A673 (cell line): ENCODE measurements at regions of chr6 and their contacts with region 1.

Region 1: DNA sequence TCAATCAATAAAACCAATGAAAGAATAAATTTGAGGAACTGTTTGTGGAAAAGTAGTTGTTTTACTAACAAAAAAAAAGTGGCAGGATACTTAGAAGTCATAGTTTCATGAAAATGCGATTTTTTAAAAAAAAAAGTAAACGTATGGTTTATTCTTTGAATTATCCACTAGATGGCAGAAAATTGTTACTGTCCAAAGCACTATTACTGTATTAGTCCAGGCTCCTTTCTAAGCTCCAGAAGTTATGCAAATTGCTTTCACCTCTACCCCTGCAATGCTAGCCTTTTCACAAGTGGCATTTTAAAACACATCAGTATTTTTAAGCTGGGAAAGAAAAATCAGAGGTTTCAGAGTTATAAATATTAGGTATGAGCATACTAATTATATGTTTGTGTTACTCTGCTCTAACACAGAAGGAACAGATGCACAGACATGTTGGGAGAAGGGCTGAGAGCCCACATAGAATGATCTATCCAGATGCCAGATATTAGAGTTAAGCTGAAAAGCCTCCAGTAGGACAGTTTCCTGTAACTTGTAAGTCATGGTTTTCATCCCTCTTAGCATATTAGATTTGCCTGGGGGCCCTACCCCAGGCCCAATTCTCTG is 63.9 kb downstream of the FHL5 start:
- DNase-seq: peak; percentile 55
- H3K4me3 ChIP-seq: no peak overlapping the region
- H3K27ac ChIP-seq: no peak overlapping the region
- H3K4me1 ChIP-seq: no peaks in the 10 kb centered on the region
- H3K27me3 ChIP-seq: no peaks in the 10 kb centered on the region
- CTCF ChIP-seq: peak; percentile 55

Region 2: GRCh38 chr6:96760153-96760687 is 133.4 kb after region 1 on chr6:
- CTCF ChIA-PET with region 1: no interaction called
- POLR2A ChIA-PET with region 1: no interaction called
- intact Hi-C with region 1: loop called (anchors 2 kb)
- DNase-seq: peak; percentile 22
- H3K4me3 ChIP-seq: no peak overlapping the region
- H3K27ac ChIP-seq: no peak overlapping the region
- H3K4me1 ChIP-seq: no peaks in the 10 kb centered on the region
- H3K27me3 ChIP-seq: no peaks in the 10 kb centered on the region
- CTCF ChIP-seq: peak; percentile 36

Region 3: GRCh38 chr6:97059473-97059872 is 432.6 kb after region 1 on chr6:
- CTCF ChIA-PET with region 1: interaction called, 8 read pairs
- POLR2A ChIA-PET with region 1: no interaction called
- intact Hi-C with region 1: loop called (anchors 2 kb)
- DNase-seq: peak; percentile 69
- H3K4me3 ChIP-seq: no peak overlapping the region
- H3K27ac ChIP-seq: no peak overlapping the region
- H3K4me1 ChIP-seq: no peaks in the 10 kb centered on the region
- H3K27me3 ChIP-seq: no peaks in the 10 kb centered on the region
- CTCF ChIP-seq: peak; percentile 72

Region 4: DNA sequence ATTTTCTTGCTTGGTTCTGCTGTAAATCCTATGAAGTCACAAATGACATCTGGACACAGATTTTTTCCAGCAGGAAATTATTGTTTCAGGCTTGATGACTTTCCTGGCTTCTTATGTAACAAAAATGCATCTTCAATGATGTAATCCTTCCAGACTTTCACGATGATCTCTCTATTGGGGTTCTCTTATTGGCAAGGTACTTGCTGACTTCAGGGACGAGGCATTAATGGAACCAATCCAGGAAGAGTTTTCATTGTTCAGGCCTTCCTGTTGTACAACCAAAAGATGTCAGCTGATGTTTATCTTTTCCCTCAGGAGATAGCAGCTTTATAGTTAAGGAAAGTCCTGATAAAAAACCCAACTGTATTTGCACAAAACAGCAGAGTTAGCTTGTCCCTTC is 774.7 kb after region 1 on chr6:
- CTCF ChIA-PET with region 1: no interaction called
- POLR2A ChIA-PET with region 1: no interaction called
- intact Hi-C with region 1: no loop called
- DNase-seq: peak; percentile 49
- H3K4me3 ChIP-seq: no peak overlapping the region
- H3K27ac ChIP-seq: no peak overlapping the region
- H3K4me1 ChIP-seq: peaks cover 3% of the 10 kb centered on the region
- H3K27me3 ChIP-seq: no peaks in the 10 kb centered on the region
- CTCF ChIP-seq: no peak